ENCODE measurements at regions of chr13 and their contacts with region 1.

Region 1: GRCh38 chr13:75341028-75341427 is 140.9 kb downstream of the TBC1D4 start:
- DNase-seq: peak; percentile 42
- CTCF ChIP-seq: no peak

Region 2: GRCh38 chr13:75181906-75182305 is 159.1 kb before region 1 on chr13:
- CTCF ChIA-PET with region 1: no interaction called
- POLR2A ChIA-PET with region 1: no interaction called
- DNase-seq: no peak
- CTCF ChIP-seq: no peak

Region 3: GRCh38 chr13:75357576-75358289 is 16.7 kb after region 1 on chr13:
- CTCF ChIA-PET with region 1: interaction called, 32 read pairs
- POLR2A ChIA-PET with region 1: no interaction called
- DNase-seq: peak; percentile 67
- CTCF ChIP-seq: peak; percentile 45

Region 4: GRCh38 chr13:75365724-75366173 is 24.7 kb after region 1 on chr13:
- CTCF ChIA-PET with region 1: interaction called, 15 read pairs
- POLR2A ChIA-PET with region 1: no interaction called
- DNase-seq: peak; percentile 52
- CTCF ChIP-seq: no peak